Activated CD4-positive, alpha-beta memory T cell treated with anti-CD3 and anti-CD28 coated beads for 36 hours (primary cell): ENCODE measurements at regions of chr4 and their contacts with region 1.

Region 1: DNA sequence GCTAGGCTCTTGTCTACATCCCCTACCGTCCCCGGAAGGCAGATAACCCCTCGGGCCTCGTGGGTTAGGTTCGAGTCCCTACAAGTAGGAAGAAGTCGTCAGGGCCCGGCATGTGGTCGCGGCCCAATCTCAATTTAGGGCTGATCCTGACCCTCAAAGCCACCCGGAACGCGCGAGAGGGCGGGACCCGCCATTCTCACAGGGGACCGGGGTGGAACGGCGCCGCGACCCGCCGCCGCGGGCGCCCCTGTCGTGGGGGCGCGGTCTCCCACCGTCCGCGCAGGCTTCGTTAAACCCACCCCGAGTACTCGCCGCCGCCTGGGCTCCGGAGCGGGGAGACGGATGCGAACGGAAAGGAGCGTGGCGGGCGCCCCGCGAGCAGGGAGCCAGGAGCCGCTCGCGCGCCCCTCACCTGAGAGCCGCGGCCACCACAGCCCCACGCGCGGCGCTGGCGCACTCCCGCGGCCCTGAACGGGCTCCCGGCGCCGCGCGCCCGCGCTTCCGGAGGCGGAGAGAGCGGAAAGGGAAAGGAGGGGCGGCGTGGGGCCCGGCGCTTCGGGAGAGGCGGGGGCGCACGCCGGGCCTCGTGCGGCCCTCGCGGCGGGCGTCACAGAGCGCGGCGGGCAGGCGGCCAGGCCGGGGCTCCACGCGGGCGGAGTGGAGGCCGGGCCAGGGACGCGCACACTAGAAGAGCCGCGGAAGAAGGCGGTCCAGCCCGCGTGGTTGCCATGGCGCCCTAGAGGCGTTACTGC is at the start of gene CFAP97:
- DNase-seq: peak; percentile 81
- H3K4me3 Mint-ChIP-seq: peak within 1 kb of the TSS; percentile 94
- H3K27ac Mint-ChIP-seq: peak within 1 kb of the TSS; percentile 97
- H3K4me1 Mint-ChIP-seq: peaks cover 48% of the 10 kb centered on the region
- H3K27me3 Mint-ChIP-seq: no peaks in the 10 kb centered on the region
- total RNA-seq, gene CFAP97: 47.5 to 48.6 TPM

Region 2: DNA sequence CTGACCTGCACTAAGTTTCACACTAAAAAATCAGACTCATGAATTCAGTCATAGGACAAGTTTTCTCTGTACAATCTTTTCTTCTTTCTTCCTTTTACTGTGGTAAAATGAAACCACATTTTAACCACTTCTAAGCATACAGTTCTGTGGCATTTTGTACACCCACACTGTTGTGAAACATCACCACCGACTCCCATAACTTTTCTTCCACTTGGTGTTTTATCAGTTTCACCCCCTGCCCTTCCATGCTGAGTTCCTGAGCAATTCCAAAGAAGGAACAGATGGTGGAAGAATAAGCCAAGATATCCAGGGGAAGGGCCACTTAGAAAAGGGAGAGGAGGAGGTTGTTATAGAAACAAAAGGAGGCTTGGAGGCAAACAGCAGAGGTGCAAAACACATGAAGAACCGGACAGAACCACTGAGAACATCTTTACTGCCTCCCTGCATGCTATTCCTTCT is 38.0 kb before region 1 on chr4:
- CTCF ChIA-PET with region 1: no interaction called
- POLR2A ChIA-PET with region 1: no interaction called
- intact Hi-C with region 1: loop called (anchors 2 kb)
- DNase-seq: no peak
- H3K4me3 Mint-ChIP-seq: no peak overlapping the region
- H3K27ac Mint-ChIP-seq: no peak overlapping the region
- H3K4me1 Mint-ChIP-seq: peaks cover 20% of the 10 kb centered on the region
- H3K27me3 Mint-ChIP-seq: no peaks in the 10 kb centered on the region

Region 3: DNA sequence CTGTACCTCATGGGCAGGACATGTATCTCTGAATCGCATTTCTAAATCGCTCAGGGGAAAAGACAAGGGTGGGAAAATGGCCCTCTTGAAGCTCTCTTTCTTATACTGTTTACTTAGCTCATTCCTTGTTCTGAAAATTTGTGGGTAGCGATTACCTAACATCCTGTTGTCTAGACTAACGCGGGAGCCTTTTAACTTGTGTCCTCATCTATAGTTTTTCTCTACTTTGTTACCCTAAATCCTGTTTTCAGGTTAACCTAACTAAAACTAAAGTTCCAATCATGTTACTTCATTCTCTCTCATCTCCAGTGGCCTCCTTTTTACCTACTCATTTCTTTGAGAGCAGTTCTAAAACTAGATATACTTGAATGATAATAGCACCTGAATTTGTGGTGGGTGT is 50.8 kb after region 1 on chr4:
- CTCF ChIA-PET with region 1: no interaction called
- POLR2A ChIA-PET with region 1: no interaction called
- intact Hi-C with region 1: loop called (anchors 5 kb)
- DNase-seq: no peak
- H3K4me3 Mint-ChIP-seq: peak overlapping the region; percentile 20
- H3K27ac Mint-ChIP-seq: peak overlapping the region; percentile 61
- H3K4me1 Mint-ChIP-seq: peaks cover 59% of the 10 kb centered on the region
- H3K27me3 Mint-ChIP-seq: no peaks in the 10 kb centered on the region

Region 4: DNA sequence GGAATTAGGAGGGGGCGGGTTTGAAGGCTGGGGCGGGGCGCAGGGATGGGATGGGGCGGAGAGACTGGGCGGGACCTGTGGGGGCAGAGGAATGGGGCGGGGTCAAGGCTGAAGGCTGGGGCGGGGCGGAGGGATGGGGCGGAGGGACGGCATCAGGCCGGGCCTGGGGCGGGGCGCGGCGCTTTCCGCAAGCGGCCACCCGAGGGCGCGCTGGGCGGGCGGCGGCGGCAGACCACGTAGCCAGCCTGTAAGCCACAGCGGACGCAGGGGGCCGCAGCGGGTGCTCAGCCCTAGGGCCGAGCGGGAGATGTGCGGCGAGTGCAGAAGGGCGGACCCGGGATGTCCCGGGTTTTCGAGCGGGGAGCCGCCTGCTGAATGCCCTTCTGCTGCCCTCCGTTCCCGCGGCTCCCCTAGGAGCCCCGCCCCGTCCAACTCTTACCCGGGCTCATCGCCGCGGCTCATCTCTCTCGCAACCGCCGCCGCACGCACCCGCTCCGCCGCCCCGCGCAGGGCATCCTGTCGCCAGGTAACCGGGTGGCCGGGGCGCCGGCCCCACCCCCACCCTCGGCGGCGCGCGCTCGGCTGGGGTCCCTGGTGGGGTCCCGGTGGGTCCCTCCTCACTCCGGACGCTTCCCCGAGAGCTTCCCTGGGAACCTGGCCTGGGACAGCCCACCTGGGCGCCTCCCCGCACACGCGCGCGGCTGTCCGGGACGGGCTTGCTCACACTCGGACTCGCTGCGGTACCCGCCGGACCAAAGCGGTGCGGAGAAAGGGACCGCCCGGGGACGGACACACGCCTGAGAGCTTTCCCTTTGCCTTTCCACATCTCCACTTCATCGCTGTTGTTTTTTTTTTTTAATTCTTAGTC is 267.8 kb after region 1 on chr4 and contains the start of gene CCDC110:
- CTCF ChIA-PET with region 1: no interaction called
- POLR2A ChIA-PET with region 1: no interaction called
- intact Hi-C with region 1: loop called (anchors 1 kb)
- DNase-seq: peak; percentile 94
- H3K4me3 Mint-ChIP-seq: peak within 1 kb of the TSS; percentile 77
- H3K27ac Mint-ChIP-seq: no peak within 1 kb of the TSS
- H3K4me1 Mint-ChIP-seq: peaks cover 4% of the 10 kb centered on the region
- H3K27me3 Mint-ChIP-seq: peaks cover 9% of the 10 kb centered on the region
- total RNA-seq, gene CCDC110: 0.10 to 0.26 TPM

Region 5: GRCh38 chr4:186191200-186192065 is 987.8 kb after region 1 on chr4 and contains the start of gene CYP4V2:
- CTCF ChIA-PET with region 1: no interaction called
- POLR2A ChIA-PET with region 1: no interaction called
- intact Hi-C with region 1: loop called (anchors 10 kb)
- DNase-seq: peak; percentile 90
- H3K4me3 Mint-ChIP-seq: peak within 1 kb of the TSS; percentile 93
- H3K27ac Mint-ChIP-seq: peak within 1 kb of the TSS; percentile 92
- H3K4me1 Mint-ChIP-seq: peaks cover 34% of the 10 kb centered on the region
- H3K27me3 Mint-ChIP-seq: no peaks in the 10 kb centered on the region
- total RNA-seq, gene CYP4V2: 4.9 to 5.2 TPM